ENCODE measurements at regions of chr7 and their contacts with region 1.

Region 1: DNA sequence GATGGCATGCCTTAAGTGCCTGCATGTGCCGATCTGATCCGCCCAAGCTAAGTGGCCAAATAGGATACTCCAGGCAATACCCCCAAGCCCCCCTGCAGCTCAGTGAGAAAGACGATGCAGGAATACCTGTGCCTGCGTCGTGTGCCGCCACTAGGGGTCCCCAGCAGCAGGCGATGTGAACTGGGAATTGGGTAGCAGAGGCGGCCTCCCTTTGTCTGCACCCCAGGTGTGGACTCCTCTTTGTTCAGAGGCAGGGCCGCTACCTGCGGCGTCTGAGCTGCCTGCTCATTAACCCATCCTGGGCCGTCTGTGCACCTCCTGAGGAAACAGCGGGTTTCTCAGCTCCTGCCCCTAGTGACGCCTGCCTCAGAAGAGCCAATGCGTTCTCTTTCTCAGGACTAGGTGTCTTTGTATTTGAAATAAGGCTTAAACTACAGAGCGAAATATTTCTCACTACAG is 4.8 kb upstream of the CHN2 start:
- DNase-seq: peak; percentile 87
- H3K4me3 ChIP-seq: no peak overlapping the region; a peak in 2 of 4 replicates
- H3K27ac ChIP-seq: no peak overlapping the region
- H3K4me1 ChIP-seq: peaks cover 0 to 6% of the 10 kb centered on the region in 2 experiments; a peak in 1 of 4 replicates
- H3K27me3 ChIP-seq: peaks cover 19% of the 10 kb centered on the region
- CTCF ChIP-seq: peak; percentile 91
- EP300 ChIP-seq: no peak
- RAD21 ChIP-seq: peak; percentile 87

Region 2: GRCh38 chr7:29105752-29106668 is 83.8 kb before region 1 on chr7:
- CTCF ChIA-PET with region 1: interaction called, 27 read pairs
- POLR2A ChIA-PET with region 1: no interaction called
- DNase-seq: peak; percentile 43
- H3K4me3 ChIP-seq: no peak overlapping the region; a peak in 1 of 4 replicates
- H3K27ac ChIP-seq: no peak overlapping the region; a peak in 1 of 4 replicates
- H3K4me1 ChIP-seq: peaks cover 0 to 16% of the 10 kb centered on the region in 2 experiments; a peak in 1 of 4 replicates
- H3K27me3 ChIP-seq: peaks cover 10% of the 10 kb centered on the region
- CTCF ChIP-seq: peak; percentile 94
- EP300 ChIP-seq: no peak
- RAD21 ChIP-seq: peak; percentile 98

Region 3: DNA sequence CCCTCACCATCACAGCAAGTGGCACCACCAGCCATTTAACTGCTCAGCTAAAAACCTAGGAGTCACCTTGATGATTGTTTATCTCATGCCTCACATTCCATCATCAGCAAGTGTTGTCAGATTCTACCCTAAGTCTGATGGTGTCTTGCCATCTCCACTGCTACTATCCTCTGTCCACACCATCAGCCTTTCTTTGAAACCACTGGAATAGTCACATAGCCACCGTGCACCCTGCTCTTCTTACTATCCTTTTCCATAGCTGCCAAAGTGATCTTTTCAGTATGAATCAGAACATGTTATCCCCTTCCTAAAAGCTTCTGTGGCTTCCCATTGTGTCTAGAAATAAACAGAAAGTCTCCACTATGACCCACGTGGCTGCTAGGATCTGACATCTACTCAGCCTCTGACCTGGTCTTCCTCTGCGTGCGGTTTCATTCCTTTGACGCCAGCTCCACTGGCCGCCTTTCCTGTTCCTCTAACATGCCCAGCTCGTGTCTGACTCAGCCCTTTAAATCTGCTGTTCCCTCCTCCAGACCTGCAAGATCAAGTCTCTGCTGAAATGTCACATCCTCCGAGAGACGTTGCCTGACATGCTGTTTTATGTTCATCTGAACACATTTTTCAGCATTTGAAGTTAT is 11.7 kb before region 1 on chr7:
- CTCF ChIA-PET with region 1: interaction called, 189 read pairs
- POLR2A ChIA-PET with region 1: interaction called, 3 read pairs
- DNase-seq: no peak
- H3K4me3 ChIP-seq: no peak overlapping the region
- H3K27ac ChIP-seq: no peak overlapping the region
- H3K4me1 ChIP-seq: no peaks in the 10 kb centered on the region
- H3K27me3 ChIP-seq: no peaks in the 10 kb centered on the region
- CTCF ChIP-seq: no peak
- EP300 ChIP-seq: no peak
- RAD21 ChIP-seq: no peak

Region 4: GRCh38 chr7:29254591-29254990 is 64.8 kb after region 1 on chr7:
- CTCF ChIA-PET with region 1: interaction called, 16 read pairs
- POLR2A ChIA-PET with region 1: no interaction called
- DNase-seq: no peak
- H3K4me3 ChIP-seq: no peak overlapping the region
- H3K27ac ChIP-seq: no peak overlapping the region
- H3K4me1 ChIP-seq: peaks cover 0 to 4% of the 10 kb centered on the region in 2 experiments; a peak in 2 of 4 replicates
- H3K27me3 ChIP-seq: no peaks in the 10 kb centered on the region
- CTCF ChIP-seq: no peak
- EP300 ChIP-seq: no peak
- RAD21 ChIP-seq: no peak

Region 5: DNA sequence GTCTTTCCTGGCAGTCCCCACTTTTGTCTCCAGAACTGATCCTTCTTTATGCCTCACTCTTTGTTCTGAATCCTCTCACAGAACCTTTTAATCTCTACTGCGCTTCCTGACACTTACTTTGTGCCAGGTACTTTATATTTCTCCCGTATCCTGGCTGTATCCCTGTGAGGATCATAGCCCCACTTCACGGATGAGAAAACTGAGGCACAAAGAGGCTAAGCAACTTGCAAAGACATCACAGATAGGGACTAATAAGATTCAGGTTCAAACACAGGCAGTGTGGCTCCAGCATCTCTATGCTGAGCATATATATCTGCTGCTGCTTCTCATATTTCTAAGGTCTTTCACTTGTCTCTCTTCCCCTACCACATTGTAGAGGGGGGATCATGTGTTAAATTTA is 121.5 kb after region 1 on chr7:
- CTCF ChIA-PET with region 1: interaction called, 26 read pairs
- POLR2A ChIA-PET with region 1: no interaction called
- DNase-seq: no peak
- H3K4me3 ChIP-seq: no peak overlapping the region
- H3K27ac ChIP-seq: no peak overlapping the region
- H3K4me1 ChIP-seq: peaks cover 0 to 8% of the 10 kb centered on the region in 2 experiments; a peak in 2 of 4 replicates
- H3K27me3 ChIP-seq: no peaks in the 10 kb centered on the region
- CTCF ChIP-seq: no peak
- EP300 ChIP-seq: no peak
- RAD21 ChIP-seq: no peak

Region 6: GRCh38 chr7:29352062-29352461 is 162.3 kb after region 1 on chr7:
- CTCF ChIA-PET with region 1: interaction called, 185 read pairs
- POLR2A ChIA-PET with region 1: no interaction called
- DNase-seq: no peak
- H3K4me3 ChIP-seq: no peak overlapping the region
- H3K27ac ChIP-seq: no peak overlapping the region
- H3K4me1 ChIP-seq: 0 out of 4 replicates have a peak, but pooled peaks cover 0 to 4% of the 10 kb centered on the region in 2 experiments
- H3K27me3 ChIP-seq: no peaks in the 10 kb centered on the region
- CTCF ChIP-seq: no peak
- EP300 ChIP-seq: no peak
- RAD21 ChIP-seq: no peak

Region 7: GRCh38 chr7:29424295-29424983 is 234.7 kb after region 1 on chr7:
- CTCF ChIA-PET with region 1: interaction called, 16 read pairs
- POLR2A ChIA-PET with region 1: no interaction called
- DNase-seq: no peak
- H3K4me3 ChIP-seq: no peak overlapping the region
- H3K27ac ChIP-seq: no peak overlapping the region
- H3K4me1 ChIP-seq: no peaks in the 10 kb centered on the region
- H3K27me3 ChIP-seq: peaks cover 4% of the 10 kb centered on the region; the same call in 1 of the 2 replicates
- CTCF ChIP-seq: no peak
- EP300 ChIP-seq: no peak
- RAD21 ChIP-seq: no peak

Measured in SK-N-SH (cell line).